Common myeloid progenitor, CD34-positive (primary cell): ENCODE measurements at regions of chr3 and their contacts with region 1.

Region 1: DNA sequence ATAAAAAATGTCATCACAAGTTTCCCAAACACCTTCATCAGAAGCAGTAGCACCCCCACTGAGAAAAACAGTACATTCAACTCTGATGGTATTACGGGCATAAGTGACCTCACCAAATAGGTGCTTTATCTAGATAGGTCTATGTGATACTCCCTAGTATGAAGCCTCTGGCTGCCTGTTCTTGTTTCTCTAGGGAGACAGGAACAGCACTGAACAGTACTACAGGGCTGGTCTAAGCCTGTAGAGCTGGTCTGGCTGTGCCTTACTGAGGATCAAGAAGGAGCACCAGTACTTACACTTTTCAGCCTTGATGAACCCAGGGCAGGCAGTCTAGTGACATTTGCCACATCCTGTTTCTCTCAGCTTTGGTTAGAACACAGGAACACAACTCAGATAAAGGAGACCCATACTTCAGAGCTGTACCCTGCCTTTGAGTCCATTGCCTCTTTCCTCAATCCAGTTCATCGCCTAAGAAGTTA is 35.9 kb downstream of the OXNAD1 start:
- DNase-seq: peak; percentile 14 to 77 (median 65)
- H3K4me3 ChIP-seq: peak overlapping the region in 3 of 7 experiments; percentile 1 to 28 (median 22)
- H3K27ac ChIP-seq: no peak overlapping the region
- H3K4me1 ChIP-seq: peaks cover 10 to 58% (median 35%) of the 10 kb centered on the region in 4 experiments
- H3K27me3 ChIP-seq: no peaks in the 10 kb centered on the region

Region 2: DNA sequence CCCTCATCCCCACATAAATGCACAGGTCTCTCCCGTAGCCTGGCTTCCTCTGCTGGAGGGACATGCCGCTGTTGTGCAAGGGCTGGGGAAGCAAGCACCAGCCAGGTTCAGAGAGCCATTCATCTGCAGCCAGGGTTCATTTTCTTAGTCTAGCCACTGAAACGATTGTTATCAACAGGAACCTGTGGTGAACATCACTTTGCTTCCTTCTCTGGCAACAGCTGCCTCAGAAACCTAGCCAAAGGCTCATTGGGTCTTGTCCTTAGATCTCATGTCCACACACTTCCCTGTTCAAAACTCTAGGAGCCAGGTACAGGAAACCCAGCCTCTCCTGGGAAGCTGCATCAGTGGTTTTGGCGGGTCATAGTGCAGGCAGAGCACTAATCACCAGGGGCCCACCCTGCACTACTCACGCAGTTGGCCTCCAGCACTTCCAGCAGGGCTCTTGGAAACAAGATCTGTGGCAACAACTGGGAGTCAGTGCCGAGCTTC is 11.1 kb after region 1 on chr3:
- CTCF ChIA-PET with region 1: interaction called, 37 read pairs
- POLR2A ChIA-PET with region 1: no interaction called
- DNase-seq: peak; percentile 67 to 92 (median 86)
- H3K4me3 ChIP-seq: peak overlapping the region in 2 of 7 experiments; percentile 6 to 22
- H3K27ac ChIP-seq: peak overlapping the region; percentile 5 to 11
- H3K4me1 ChIP-seq: peaks cover 13 to 54% (median 47%) of the 10 kb centered on the region in 4 experiments
- H3K27me3 ChIP-seq: no peaks in the 10 kb centered on the region

Region 3: DNA sequence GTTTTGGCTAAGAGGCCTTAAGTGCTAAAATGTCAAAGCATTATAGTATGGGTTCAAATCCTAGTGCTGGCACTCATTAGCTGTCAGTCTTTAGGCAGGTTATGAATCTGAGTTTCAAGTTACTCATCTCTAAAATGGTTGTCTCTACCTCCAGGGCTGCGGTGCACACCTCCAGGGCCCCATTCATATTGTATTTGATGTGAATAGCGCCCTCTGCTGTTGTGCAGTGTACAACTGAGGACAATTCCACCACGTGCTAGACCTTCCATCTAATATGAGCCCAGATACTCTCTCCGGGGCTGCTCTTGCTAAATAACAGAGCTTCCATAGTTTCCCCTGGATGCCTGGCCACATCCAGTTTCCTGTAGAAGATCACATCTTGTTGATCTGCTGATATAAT is 18.4 kb after region 1 on chr3:
- CTCF ChIA-PET with region 1: interaction called, 37 read pairs
- POLR2A ChIA-PET with region 1: interaction called, 3 read pairs
- DNase-seq: peak; percentile 46 to 63 (median 61)
- H3K4me3 ChIP-seq: no peak overlapping the region
- H3K27ac ChIP-seq: no peak overlapping the region
- H3K4me1 ChIP-seq: peaks cover 3 to 9% (median 6%) of the 10 kb centered on the region in 4 experiments
- H3K27me3 ChIP-seq: no peaks in the 10 kb centered on the region